Ascending aorta (tissue), 2 donors: ENCODE measurements at regions of chr3 and their contacts with region 1.

Region 1: GRCh38 chr3:58532794-58533220 is 4.2 kb downstream of the ACOX2 start:
- DNase-seq: peak in 1 of 2 donors; percentile 85
- H3K4me3 ChIP-seq: no peak overlapping the region
- H3K27ac ChIP-seq: no peak overlapping the region
- H3K4me1 ChIP-seq: peaks cover 0 to 9% of the 10 kb centered on the region in 2 donors
- H3K27me3 ChIP-seq: no peaks in the 10 kb centered on the region
- CTCF ChIP-seq: peak; percentile 80 to 92 (median 86)

Region 2: DNA sequence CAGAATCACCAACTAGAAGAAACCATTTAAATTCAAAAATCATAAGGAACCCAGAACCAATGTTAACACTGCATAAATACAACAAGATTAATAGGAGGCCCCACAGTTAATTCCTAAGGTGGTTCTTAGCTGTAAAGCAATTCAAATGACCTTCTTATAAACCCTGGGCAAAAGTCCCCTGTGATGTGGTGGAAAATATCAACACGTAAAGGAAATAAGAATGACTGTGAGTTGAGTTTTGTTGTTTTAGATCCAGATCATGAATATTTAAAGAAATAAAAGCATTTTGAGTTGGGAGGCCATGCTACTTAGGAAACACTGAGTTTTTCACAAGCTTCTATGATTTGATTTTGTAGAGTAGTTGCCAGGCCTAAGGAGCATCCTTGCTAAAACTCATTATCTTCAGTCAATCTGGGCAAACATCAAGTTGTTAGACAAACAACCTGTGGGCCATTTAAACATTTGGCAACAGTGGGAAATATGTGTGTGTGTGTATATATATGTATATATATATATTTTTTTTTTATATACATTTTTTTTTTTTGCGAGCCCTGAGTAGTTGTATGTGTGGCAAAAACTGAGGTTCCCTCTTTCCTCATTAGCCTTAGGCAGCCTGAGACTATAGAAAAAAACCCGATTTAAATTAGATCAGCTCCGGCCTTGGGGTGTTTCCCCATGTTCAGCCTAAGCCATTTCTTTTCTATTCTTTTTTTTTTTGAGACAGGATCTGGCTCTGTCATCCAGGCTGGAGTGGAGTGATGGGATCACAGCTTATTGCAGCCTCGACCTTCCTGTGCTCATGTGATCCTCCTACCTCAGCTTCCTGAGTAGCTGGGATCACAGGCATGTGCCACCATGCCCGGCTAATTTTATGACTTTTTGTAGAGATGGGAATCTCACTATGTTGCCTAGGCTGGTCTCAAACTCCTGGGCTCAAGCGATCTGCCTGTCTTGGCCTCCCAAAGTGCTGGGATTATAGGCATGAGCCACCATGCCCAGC is 208.1 kb before region 1 on chr3:
- intact Hi-C with region 1: loop called (anchors 5 kb)
- DNase-seq: no peak
- H3K4me3 ChIP-seq: no peak overlapping the region
- H3K27ac ChIP-seq: peak overlapping the region in 1 of 2 donors; percentile 44
- H3K4me1 ChIP-seq: peaks cover 0 to 2% of the 10 kb centered on the region in 2 donors
- H3K27me3 ChIP-seq: no peaks in the 10 kb centered on the region
- CTCF ChIP-seq: no peak

Region 3: GRCh38 chr3:58463181-58463941 is 69.4 kb before region 1 on chr3:
- intact Hi-C with region 1: loop called (anchors 1 kb)
- DNase-seq: peak; percentile 25 to 86
- H3K4me3 ChIP-seq: peak overlapping the region in 1 of 2 donors; percentile 56
- H3K27ac ChIP-seq: no peak overlapping the region
- H3K4me1 ChIP-seq: peaks cover 0 to 2% of the 10 kb centered on the region in 2 donors
- H3K27me3 ChIP-seq: no peaks in the 10 kb centered on the region
- CTCF ChIP-seq: peak; percentile 62 to 82 (median 80)

Region 4: GRCh38 chr3:58704745-58705144 is 171.9 kb after region 1 on chr3:
- intact Hi-C with region 1: no loop called
- DNase-seq: no peak
- H3K4me3 ChIP-seq: no peak overlapping the region
- H3K27ac ChIP-seq: no peak overlapping the region
- H3K4me1 ChIP-seq: no peaks in the 10 kb centered on the region
- H3K27me3 ChIP-seq: no peaks in the 10 kb centered on the region
- CTCF ChIP-seq: no peak

Region 5: GRCh38 chr3:59313365-59313764 is 780.6 kb after region 1 on chr3:
- intact Hi-C with region 1: no loop called
- DNase-seq: no peak
- H3K4me3 ChIP-seq: no peak overlapping the region
- H3K27ac ChIP-seq: no peak overlapping the region
- H3K4me1 ChIP-seq: no peaks in the 10 kb centered on the region
- H3K27me3 ChIP-seq: no peaks in the 10 kb centered on the region
- CTCF ChIP-seq: no peak